Esophagus muscularis mucosa (tissue), 4 donors: ENCODE measurements at regions of chr2 and their contacts with region 1.

Region 1: GRCh38 chr2:216687646-216688045 is 7.7 kb downstream of the IGFBP5 start:
- DNase-seq: no peak
- H3K4me3 ChIP-seq: no peak overlapping the region
- H3K27ac ChIP-seq: peak overlapping the region; percentile 84 to 94 (median 88)
- H3K4me1 ChIP-seq: peaks cover 53 to 100% (median 96%) of the 10 kb centered on the region in 4 donors
- H3K27me3 ChIP-seq: peaks cover 0 to 3% (median 0%) of the 10 kb centered on the region in 4 donors
- CTCF ChIP-seq: peak; percentile 10 to 46 (median 16)
- EP300 ChIP-seq: no peak
- POLR2A ChIP-seq: no peak

Region 2: GRCh38 chr2:215680605-215681598 is 1006.7 kb before region 1 on chr2:
- intact Hi-C with region 1: no loop called
- DNase-seq: no peak
- H3K4me3 ChIP-seq: no peak overlapping the region
- H3K27ac ChIP-seq: peak overlapping the region in 1 of 4 donors; percentile 7
- H3K4me1 ChIP-seq: peaks cover 0 to 16% (median 4%) of the 10 kb centered on the region in 4 donors
- H3K27me3 ChIP-seq: no peaks in the 10 kb centered on the region
- CTCF ChIP-seq: no peak
- EP300 ChIP-seq: no peak
- POLR2A ChIP-seq: no peak

Region 3: GRCh38 chr2:215851082-215851481 is 836.6 kb before region 1 on chr2:
- intact Hi-C with region 1: no loop called
- DNase-seq: no peak
- H3K4me3 ChIP-seq: no peak overlapping the region
- H3K27ac ChIP-seq: peak overlapping the region in 3 of 4 donors; percentile 40 to 50 (median 44)
- H3K4me1 ChIP-seq: peaks cover 0 to 40% (median 36%) of the 10 kb centered on the region in 4 donors
- H3K27me3 ChIP-seq: no peaks in the 10 kb centered on the region
- CTCF ChIP-seq: no peak
- EP300 ChIP-seq: no peak
- POLR2A ChIP-seq: no peak

Region 4: GRCh38 chr2:215949991-215950404 is 737.6 kb before region 1 on chr2:
- intact Hi-C with region 1: no loop called
- DNase-seq: no peak
- H3K4me3 ChIP-seq: no peak overlapping the region
- H3K27ac ChIP-seq: no peak overlapping the region
- H3K4me1 ChIP-seq: no peaks in the 10 kb centered on the region
- H3K27me3 ChIP-seq: no peaks in the 10 kb centered on the region
- CTCF ChIP-seq: peak; percentile 11 to 35 (median 21)
- EP300 ChIP-seq: no peak
- POLR2A ChIP-seq: no peak

Region 5: GRCh38 chr2:217331523-217332139 is 644.0 kb after region 1 on chr2:
- intact Hi-C with region 1: loop called (anchors 10 kb)
- DNase-seq: no peak
- H3K4me3 ChIP-seq: no peak overlapping the region
- H3K27ac ChIP-seq: peak overlapping the region; percentile 80 to 82 (median 82)
- H3K4me1 ChIP-seq: peaks cover 28 to 65% (median 62%) of the 10 kb centered on the region in 4 donors
- H3K27me3 ChIP-seq: no peaks in the 10 kb centered on the region
- CTCF ChIP-seq: no peak
- EP300 ChIP-seq: peak; percentile 17
- POLR2A ChIP-seq: no peak